AG04450 (cell line): ENCODE measurements at regions of chr15 and their contacts with region 1.

Region 1: DNA sequence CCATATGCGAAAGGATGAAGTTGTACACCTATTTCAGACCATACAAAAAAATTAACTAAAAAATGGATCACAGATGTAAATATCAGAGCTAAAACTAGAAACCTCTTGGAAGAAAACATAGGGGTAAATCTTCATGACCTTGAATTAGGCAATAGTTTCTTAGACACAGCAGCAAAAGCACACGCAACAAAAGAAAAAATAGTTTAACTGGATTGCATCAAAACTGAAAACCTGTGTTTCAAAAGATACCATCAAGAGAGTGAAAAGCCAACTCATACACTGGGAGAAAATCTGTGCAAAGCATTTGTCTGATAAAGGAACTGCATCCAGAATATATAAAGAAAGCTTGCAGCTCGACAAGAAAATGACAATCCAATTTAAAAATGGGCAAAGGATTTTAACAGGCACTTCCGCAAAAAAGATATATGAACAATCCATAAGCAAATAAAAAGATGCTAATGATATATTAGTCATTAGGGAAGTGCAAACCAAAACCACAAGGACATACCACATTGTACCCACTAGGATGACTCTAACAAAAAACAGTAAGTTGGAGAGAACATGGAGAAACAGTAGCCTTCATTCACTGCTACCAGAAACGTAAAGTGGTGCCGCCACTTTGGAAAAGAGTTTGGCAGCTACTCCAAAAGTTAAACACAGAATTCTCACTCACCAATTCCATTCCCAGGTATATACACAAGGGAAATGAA is 263.1 kb downstream of the ADAMTS17 start:
- DNase-seq: no peak
- H3K4me3 ChIP-seq: no peak overlapping the region
- H3K27ac ChIP-seq: no peak overlapping the region
- H3K27me3 ChIP-seq: no peaks in the 10 kb centered on the region
- CTCF ChIP-seq: no peak

Region 2: GRCh38 chr15:99986297-99987118 is 92.2 kb before region 1 on chr15:
- CTCF ChIA-PET with region 1: no interaction called
- POLR2A ChIA-PET with region 1: no interaction called
- DNase-seq: no peak
- H3K4me3 ChIP-seq: no peak overlapping the region
- H3K27ac ChIP-seq: no peak overlapping the region
- H3K27me3 ChIP-seq: no peaks in the 10 kb centered on the region
- CTCF ChIP-seq: no peak

Region 3: DNA sequence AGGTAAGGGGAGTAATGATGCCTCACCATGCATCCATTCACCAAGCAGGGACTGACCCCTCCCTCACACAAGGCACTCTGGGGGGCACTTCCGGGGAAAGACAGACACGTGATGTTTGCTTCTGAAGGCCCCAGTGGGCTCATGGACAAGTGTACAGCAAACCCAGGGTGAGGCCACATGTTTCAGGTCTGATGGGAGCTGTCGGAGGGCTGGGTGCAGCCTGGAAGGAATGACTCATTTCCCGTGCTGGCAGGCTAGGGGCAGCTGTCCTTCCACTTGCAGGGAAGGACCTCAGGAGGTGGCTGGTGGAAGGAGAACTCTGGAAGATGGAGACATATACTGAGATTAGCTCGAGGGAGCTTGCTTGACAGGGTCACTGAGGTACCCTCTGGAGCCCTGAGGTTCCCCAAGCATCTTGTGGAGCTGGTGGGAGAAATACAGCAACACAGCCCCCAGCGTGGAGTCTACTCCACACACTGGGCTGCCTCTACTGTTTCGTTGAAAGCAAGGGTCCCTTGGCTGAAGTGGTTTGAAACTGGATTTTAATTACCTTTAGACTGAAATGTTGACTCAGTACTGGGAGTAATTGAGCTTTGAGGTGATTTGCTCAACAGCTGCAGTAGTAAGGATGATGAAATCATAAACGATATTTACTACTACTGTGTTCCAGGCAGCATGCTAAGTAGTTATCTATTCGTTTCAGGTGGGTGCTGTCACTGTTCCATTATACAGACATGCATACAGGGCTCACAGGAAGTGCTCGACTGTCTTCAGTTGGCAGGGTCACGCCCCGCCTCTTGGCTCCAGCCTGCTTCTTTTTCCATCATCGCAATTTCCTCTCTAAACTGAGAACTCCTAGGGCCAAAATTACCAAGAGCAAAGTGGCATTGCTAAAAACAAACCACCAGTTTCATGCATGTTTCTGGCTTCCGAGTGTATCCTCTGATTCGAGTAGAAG is 32.7 kb after region 1 on chr15:
- CTCF ChIA-PET with region 1: no interaction called
- POLR2A ChIA-PET with region 1: interaction called, 10 read pairs
- DNase-seq: peak; percentile 59
- H3K4me3 ChIP-seq: no peak overlapping the region
- H3K27ac ChIP-seq: peak overlapping the region; percentile 87
- H3K27me3 ChIP-seq: no peaks in the 10 kb centered on the region
- CTCF ChIP-seq: no peak